Dendritic cell treated with granulocyte-macrophage colony-stimulating factor and Interleukin-4, amounts not matched to agents 40 ng/mL and 50 ng/mL, for 4 days (primary cell): ENCODE measurements at regions of chr2 and their contacts with region 1.

Region 1: DNA sequence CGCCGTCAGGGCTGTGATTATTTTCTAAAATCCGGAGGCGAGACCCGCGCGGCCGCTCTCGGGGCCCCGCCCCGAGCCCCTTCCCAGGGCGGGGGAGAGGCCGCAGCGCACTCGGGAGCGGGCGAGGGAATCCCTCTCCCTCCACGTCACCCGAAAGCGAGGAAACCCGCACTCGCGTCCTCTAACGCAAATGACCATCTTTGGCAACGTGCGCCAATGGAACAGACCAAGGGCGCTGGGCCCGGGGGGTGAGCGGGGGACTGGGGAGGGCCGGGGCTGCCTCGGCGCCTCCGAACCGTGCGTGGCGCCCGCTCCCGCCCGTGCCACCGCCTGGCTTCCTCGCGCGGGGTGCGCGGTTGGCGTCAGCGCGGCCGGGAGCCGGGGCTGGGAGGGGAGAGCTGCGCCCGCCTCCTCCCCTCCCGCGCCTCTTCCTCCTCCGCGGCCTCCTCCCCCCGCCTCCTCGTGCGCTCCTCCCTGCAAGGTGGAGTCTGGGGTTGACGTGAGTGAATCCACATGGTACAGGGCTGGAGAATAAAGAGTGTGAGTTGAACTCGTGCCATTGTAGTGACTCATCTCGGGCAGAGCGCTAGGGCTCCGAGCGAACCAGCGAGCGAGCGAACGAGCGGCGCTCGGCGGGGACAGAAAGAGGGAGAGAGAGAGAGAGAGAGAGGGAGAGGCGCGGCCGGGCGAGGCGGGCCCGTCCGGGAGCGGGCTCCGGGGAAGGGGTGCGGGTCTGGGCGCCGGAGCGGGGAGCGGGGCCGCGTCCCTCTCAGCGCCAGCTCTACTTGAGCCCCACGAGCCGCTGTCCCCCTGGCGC is at the start of gene FOSL2:
- H3K4me3 Mint-ChIP-seq: peak within 1 kb of the TSS; percentile 82
- H3K27ac Mint-ChIP-seq: no peak within 1 kb of the TSS
- H3K4me1 Mint-ChIP-seq: peaks cover 22% of the 10 kb centered on the region
- H3K27me3 Mint-ChIP-seq: peaks cover 12% of the 10 kb centered on the region

Region 2: GRCh38 chr2:27754138-27754588 is 638.3 kb before region 1 on chr2:
- intact Hi-C with region 1: loop called (anchors 2 kb)
- H3K4me3 Mint-ChIP-seq: no peak overlapping the region
- H3K27ac Mint-ChIP-seq: peak overlapping the region; percentile 83
- H3K4me1 Mint-ChIP-seq: peaks cover 39% of the 10 kb centered on the region
- H3K27me3 Mint-ChIP-seq: no peaks in the 10 kb centered on the region

Region 3: GRCh38 chr2:28342081-28342967 is 50.2 kb before region 1 on chr2:
- intact Hi-C with region 1: loop called (anchors 5 kb)
- H3K4me3 Mint-ChIP-seq: peak overlapping the region; percentile 20
- H3K27ac Mint-ChIP-seq: peak overlapping the region; percentile 54
- H3K4me1 Mint-ChIP-seq: peaks cover 42% of the 10 kb centered on the region
- H3K27me3 Mint-ChIP-seq: peaks cover 5% of the 10 kb centered on the region

Region 4: DNA sequence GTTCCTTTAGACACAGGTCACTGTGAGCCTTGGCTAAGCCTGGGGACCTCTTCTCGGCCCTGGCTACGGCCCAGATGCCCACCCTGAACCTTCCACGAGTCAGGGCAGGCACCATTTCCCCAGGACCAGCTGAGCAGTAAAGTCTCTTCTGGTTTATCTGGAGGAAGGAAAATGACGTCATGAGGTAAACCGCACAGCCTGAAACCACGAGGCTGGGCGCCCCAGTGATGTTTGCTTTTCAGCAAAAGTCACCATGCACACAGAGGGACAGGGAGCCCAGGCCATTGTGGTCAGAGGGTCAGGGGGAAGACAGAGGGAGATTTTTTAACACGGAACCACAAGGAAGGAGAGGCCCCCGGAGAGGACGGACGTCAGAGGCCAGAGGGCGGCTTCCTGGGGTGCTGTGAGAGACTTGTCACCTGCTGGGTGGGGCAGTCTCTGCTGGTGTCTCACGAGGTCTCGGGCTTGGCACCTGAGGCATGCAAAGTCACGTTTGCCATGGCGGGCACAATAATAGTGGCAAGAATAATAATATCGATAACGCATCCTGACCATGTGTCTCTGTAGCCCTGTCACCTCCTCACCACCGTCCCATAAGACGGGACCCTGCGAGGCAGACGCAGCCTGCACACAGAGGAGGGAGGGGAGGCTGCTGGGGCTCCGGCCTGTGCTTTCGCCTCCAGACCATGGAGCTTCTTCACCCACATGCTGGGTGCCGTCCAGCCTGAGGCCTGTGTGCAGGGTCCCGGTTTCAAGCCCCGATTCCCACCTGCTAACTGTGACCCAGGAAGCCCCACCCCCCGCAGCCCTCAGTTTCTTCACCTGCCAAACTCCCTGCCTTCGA is 33.1 kb before region 1 on chr2:
- intact Hi-C with region 1: loop called (anchors 1 kb)
- H3K4me3 Mint-ChIP-seq: peak overlapping the region; percentile 18
- H3K27ac Mint-ChIP-seq: peak overlapping the region; percentile 75
- H3K4me1 Mint-ChIP-seq: peaks cover 79% of the 10 kb centered on the region
- H3K27me3 Mint-ChIP-seq: peaks cover 59% of the 10 kb centered on the region

Region 5: GRCh38 chr2:28452534-28453081 is 60.1 kb after region 1 on chr2:
- intact Hi-C with region 1: loop called (anchors 2 kb)
- H3K4me3 Mint-ChIP-seq: no peak overlapping the region
- H3K27ac Mint-ChIP-seq: no peak overlapping the region
- H3K4me1 Mint-ChIP-seq: peaks cover 56% of the 10 kb centered on the region
- H3K27me3 Mint-ChIP-seq: no peaks in the 10 kb centered on the region